ENCODE measurements at regions of chr16 and their contacts with region 1.

Region 1: DNA sequence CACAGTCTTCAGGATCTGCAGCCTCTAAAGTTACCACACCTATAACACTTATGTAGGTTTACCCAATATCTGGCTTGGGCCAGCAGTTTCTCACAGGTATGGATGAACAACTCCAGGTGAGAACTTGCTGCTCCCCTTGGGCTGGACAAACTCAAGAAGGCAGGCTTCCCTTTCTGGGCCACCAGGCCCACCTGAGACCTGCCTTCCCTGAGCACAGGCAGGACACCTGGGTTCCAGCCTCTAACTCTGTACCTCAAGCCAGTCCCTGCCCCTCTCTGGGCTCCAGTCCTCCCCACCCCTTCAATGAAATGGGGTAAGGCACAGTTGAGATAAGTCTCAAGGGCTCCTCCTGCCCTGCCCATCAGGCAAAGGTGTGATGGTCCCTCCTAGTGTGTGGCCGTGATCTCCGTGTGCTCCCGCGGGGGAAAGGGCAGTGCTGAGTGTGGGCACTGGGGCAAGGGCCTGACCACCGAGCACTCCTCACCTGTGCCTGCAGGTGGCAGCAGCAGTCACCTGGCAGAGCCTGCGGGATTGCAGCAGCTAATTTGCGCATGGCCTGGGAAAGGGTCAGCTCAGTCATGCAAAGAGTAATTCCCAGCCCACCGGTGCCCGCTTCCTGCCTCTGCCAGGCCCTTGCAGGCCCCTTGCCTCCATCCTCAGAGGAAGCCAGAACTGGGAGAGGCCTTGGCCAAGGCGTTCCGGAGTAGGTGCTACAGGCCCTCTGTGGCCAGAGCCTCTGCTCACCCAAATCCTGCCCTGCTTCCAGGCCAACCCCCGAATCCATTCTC is 28.2 kb upstream of the ADGRG1 start:
- DNase-seq: no peak
- H3K4me3 ChIP-seq: no peak overlapping the region
- H3K27ac ChIP-seq: no peak overlapping the region
- H3K4me1 ChIP-seq: peaks cover 4% of the 10 kb centered on the region
- H3K27me3 ChIP-seq: peaks cover 9% of the 10 kb centered on the region
- CTCF ChIP-seq: peak; percentile 82

Region 2: DNA sequence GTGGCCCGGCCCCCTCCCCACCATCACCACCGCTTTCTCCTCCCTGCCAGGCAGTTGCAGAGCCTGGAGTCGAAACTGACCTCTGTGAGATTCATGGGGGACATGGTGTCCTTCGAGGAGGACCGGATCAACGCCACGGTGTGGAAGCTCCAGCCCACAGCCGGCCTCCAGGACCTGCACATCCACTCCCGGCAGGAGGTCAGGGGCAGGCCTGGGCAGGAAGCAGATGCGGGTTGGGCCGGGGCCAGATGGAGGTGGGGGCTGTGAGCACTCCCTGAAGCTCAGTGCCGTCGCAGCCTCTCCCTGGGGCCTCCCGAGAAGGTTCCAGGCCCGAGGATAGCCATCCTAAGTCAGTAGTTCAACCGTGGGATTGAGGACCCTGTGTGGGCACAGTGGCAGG is 53.7 kb after region 1 on chr16:
- intact Hi-C with region 1: loop called (anchors 10 kb)
- DNase-seq: peak; percentile 54
- H3K4me3 ChIP-seq: no peak overlapping the region
- H3K27ac ChIP-seq: no peak overlapping the region
- H3K4me1 ChIP-seq: peaks cover 15% of the 10 kb centered on the region
- H3K27me3 ChIP-seq: peaks cover 3% of the 10 kb centered on the region
- CTCF ChIP-seq: no peak

Region 3: DNA sequence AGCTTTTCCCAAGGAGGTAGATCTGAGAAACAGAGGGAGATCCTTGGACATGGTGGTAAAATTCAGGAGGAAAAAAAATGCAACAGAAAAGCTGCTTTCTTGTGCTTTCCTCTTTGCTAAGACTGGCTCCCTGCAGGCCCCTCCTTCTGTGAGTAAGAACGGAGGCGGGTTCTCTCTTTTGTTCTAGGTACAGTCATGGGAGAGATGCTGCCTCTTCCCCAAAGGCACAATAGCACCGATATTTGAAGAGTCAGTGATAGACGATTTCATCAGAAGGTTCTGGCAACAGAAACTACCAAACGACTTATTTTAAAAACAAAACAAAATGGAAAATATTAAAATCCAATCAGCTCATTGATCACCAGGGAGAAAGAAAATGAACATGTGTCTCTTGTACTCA is 234.7 kb after region 1 on chr16:
- intact Hi-C with region 1: no loop called
- DNase-seq: no peak
- H3K4me3 ChIP-seq: no peak overlapping the region
- H3K27ac ChIP-seq: no peak overlapping the region
- H3K4me1 ChIP-seq: peaks cover 4% of the 10 kb centered on the region
- H3K27me3 ChIP-seq: no peaks in the 10 kb centered on the region
- CTCF ChIP-seq: no peak

Measured in left ventricle myocardium inferior (tissue), 1 donor.